GM13976 (cell line): ENCODE measurements at regions of chr6 and their contacts with region 1.

Region 1: DNA sequence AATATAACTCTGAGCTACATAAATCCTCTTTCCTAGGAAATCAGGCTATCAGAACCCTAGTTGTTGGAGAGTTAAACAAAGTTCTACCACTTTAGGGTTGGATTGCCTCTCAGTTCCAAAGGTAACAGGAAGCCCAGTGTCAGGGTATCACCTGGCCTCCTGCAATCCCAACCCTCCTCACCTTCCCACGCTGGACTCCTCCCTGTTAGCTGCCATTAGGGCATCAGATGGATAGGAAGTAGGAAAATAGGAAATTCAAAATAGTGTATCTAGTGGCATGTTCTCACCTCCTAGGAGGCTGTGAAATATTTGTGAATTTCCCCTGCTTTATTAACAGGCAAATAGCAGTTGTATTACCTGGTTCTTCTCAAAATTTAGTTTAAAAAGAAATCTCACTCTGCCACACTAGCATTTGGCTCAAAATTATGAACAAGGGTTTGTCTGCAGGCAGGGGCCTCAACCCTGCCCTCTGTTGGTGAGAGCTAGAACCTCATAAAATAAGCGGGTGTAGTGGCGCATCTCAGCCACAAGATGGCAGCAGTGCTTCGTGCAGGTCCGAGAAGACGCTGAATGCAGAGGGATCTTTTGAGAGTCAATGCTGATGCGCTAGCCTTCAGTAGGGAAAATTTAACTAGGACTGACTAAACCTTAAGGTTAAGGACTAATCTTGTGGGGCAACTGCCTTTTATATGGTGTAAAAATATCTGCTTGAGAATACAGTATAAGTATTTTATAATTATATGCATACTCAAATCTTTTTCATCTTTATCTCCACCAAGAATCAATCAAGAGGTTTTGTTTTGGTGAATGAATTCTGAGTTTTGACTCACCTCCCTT is 209.8 kb upstream of the KCNQ5 start:
- DNase-seq: peak; percentile 74
- CTCF ChIP-seq: peak; percentile 100

Region 2: DNA sequence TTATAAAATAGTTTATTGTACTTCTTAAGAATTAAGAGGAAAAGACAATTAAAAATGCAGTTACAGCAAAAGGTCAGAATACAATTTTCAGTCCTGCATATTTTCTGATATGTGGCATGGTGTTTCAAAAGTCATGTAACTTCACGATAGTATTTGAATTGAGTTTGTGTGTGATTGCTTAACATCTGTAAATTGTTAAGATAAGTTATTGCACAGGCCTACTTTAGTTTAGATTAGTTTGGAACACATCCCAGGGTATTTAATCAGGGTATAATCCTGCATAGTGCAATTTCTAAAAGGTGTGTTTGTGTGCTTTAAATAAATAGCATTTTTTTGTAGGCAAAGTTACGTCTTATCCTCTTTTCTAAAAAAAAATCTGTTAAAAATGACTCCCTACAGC is 236.2 kb before region 1 on chr6:
- in situ Hi-C with region 1: no loop called
- DNase-seq: no peak
- CTCF ChIP-seq: no peak

Region 3: DNA sequence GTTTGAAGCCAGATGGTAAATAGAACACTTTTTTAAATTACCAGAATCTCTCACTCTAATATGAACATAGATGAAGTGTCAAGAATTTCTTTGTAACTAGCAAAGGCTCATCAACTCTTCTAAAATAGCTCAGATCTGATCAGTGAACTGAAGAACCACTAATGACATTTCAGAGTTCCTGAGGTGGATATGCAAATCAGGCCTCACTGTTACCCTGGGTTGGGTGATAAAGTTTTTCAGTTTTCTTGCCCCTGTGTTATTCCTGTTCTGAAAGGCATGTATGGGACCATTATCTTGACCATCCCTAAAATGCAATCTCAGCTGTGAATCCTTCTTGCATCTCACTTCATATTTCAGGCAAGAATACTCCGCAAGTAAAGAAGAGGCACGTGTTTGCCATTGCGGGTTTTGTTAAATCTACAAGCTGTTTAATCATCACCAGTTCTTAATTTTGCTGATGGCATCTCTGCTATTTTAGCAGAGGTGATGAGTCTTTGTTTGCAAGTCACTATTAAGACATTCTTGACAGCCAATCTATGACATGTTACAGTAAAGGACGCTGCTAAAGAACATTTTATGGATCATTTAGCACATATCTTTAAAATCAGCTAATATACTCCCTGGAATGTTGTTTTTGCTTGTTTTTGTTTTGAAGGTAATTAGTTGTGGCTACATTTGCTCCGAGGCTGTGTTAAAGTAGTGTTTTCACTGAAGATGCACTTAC is 765.3 kb after region 1 on chr6:
- in situ Hi-C with region 1: loop called (anchors 10 kb)
- DNase-seq: no peak
- CTCF ChIP-seq: no peak

Region 4: DNA sequence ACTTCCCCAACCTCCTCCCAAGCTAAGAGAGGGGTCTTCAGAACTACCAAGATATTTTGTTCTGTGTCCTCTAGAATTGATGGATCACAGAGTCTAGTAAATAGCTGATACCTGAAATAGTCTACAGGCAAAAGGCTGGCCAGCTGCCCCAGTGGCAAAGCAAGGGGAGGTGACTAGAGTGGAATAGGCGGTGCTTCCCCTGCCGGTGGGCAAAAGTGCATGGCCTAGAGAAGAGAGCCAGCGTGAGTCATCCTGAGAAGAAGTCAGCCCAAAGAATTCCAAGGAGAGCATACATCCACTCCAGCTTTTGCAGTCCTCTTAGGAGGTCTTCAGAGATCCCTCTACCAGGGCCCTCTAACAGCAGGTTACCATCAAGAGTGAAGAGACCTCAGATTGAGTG is 927.3 kb after region 1 on chr6:
- in situ Hi-C with region 1: loop called (anchors 25 kb)
- DNase-seq: no peak
- CTCF ChIP-seq: no peak